ENCODE measurements at regions of chr18 and their contacts with region 1.

Region 1: GRCh38 chr18:33097126-33097525 is 324.3 kb upstream of the KLHL14 start:
- DNase-seq: no peak
- H3K4me3 ChIP-seq: no peak overlapping the region
- H3K27ac ChIP-seq: no peak overlapping the region
- H3K4me1 ChIP-seq: no peaks in the 10 kb centered on the region
- H3K27me3 ChIP-seq: no peaks in the 10 kb centered on the region
- CTCF ChIP-seq: no peak

Region 2: DNA sequence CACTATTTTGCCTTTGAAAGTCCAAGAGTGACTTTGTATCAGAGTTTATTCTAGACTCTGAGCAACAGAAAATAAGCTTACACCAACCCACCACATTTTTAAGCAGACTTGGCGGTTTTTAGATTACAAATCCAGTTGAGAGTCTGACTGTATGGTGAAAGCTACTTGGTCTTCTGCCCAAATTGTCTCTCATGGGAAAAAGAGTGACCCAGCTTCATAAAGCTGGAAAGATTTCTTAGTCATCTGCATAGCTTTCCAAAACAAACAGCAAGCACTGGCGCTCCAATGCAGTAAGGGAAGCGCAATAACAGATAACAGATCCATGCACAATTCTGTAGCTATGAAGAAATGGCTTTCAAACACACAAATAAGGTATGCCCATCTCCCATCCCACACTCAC is 1772.1 kb before region 1 on chr18:
- CTCF ChIA-PET with region 1: no interaction called
- POLR2A ChIA-PET with region 1: no interaction called
- intact Hi-C with region 1: no loop called
- DNase-seq: no peak
- H3K4me3 ChIP-seq: no peak overlapping the region
- H3K27ac ChIP-seq: no peak overlapping the region
- H3K4me1 ChIP-seq: no peaks in the 10 kb centered on the region
- H3K27me3 ChIP-seq: peaks cover 8% of the 10 kb centered on the region
- CTCF ChIP-seq: no peak

Region 3: DNA sequence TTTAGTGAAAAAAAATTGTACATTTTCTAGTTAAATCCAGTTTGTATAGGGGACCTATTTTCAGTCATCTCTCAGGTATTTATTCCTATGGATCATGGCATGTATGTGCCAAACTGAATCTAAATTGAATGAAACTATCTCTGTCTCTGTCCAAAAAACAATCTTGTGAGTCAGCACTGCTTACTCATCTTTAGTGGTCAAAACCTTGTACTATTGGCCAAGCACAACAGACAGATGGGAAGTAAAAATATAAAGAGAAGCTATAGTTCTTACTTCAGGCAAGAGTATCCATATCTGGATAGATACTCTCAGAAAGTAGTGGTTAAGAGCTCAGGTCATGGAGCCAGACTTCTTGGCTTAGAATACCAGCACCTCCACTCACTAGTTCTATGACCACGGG is 248.3 kb before region 1 on chr18:
- CTCF ChIA-PET with region 1: no interaction called
- POLR2A ChIA-PET with region 1: no interaction called
- intact Hi-C with region 1: no loop called
- DNase-seq: no peak
- H3K4me3 ChIP-seq: no peak overlapping the region
- H3K27ac ChIP-seq: no peak overlapping the region
- H3K4me1 ChIP-seq: no peaks in the 10 kb centered on the region
- H3K27me3 ChIP-seq: no peaks in the 10 kb centered on the region
- CTCF ChIP-seq: no peak

Region 4: GRCh38 chr18:33123862-33124518 is 26.9 kb after region 1 on chr18:
- CTCF ChIA-PET with region 1: no interaction called
- POLR2A ChIA-PET with region 1: no interaction called
- intact Hi-C with region 1: loop called (anchors 2 kb)
- DNase-seq: no peak
- H3K4me3 ChIP-seq: no peak overlapping the region
- H3K27ac ChIP-seq: no peak overlapping the region
- H3K4me1 ChIP-seq: no peaks in the 10 kb centered on the region
- H3K27me3 ChIP-seq: no peaks in the 10 kb centered on the region
- CTCF ChIP-seq: no peak

Measured in A673 (cell line).